MCF 10A (cell line): ENCODE measurements at regions of chr11 and their contacts with region 1.

Region 1: GRCh38 chr11:18243783-18244362 is 4.6 kb downstream of the SAA2 start:
- DNase-seq: peak; percentile 86
- H3K4me3 Mint-ChIP-seq: no peak overlapping the region
- H3K27ac Mint-ChIP-seq: no peak overlapping the region
- H3K4me1 Mint-ChIP-seq: peaks cover 24% of the 10 kb centered on the region
- H3K27me3 Mint-ChIP-seq: peaks cover 10% of the 10 kb centered on the region
- CTCF ChIP-seq: peak; percentile 94

Region 2: DNA sequence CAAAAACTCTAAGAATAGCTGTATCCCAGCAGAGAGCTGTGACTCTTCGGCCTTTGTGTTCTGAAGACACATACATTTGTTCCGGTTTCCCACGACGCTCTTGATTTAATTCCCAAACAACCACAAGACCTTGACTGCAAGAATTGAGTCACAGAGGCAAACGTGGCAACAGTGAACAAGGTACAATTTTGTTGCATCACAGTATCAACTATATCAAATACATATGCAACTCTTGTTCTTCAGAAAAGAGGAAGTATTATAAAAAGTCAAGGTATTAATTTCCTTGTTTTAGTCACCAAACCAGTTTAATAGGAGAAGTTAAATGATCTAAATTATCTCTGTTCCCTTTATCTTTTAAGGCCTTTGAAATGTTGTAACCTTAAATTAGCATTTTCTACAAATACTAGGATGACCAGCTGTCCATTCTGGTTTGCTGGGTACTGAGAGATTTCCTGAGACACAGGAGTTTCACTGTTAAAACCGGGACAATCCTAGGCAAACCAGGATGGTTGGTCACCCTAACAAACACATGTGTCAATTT is 67.0 kb after region 1 on chr11:
- CTCF ChIA-PET with region 1: interaction called, 27 read pairs
- POLR2A ChIA-PET with region 1: interaction called, 3 read pairs
- intact Hi-C with region 1: no loop called
- DNase-seq: peak; percentile 88
- H3K4me3 Mint-ChIP-seq: peak overlapping the region; percentile 60
- H3K27ac Mint-ChIP-seq: peak overlapping the region; percentile 96
- H3K4me1 Mint-ChIP-seq: peaks cover 63% of the 10 kb centered on the region
- H3K27me3 Mint-ChIP-seq: no peaks in the 10 kb centered on the region
- CTCF ChIP-seq: no peak

Region 3: DNA sequence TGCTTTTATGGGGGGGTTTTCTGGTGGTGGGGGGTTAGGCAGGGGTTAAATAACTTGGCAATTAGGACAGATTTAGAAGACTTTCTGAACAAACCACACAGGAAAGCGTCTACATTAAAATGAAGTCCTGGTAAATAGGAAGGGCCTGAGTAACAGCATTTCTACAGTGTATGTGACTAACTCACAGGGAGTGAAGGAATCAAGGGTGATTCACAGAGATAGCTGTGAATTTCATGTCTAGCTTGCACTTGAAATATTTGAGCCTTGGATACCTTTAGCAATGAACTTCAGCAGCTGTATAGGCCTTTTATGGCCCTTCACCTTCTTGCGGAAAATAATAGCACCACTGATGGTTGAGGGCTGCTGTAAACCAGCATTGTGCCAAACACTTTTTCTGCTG is 124.3 kb after region 1 on chr11:
- CTCF ChIA-PET with region 1: interaction called, 6 read pairs
- POLR2A ChIA-PET with region 1: no interaction called
- intact Hi-C with region 1: loop called (anchors 5 kb)
- DNase-seq: no peak
- H3K4me3 Mint-ChIP-seq: no peak overlapping the region
- H3K27ac Mint-ChIP-seq: no peak overlapping the region
- H3K4me1 Mint-ChIP-seq: peaks cover 6% of the 10 kb centered on the region
- H3K27me3 Mint-ChIP-seq: no peaks in the 10 kb centered on the region
- CTCF ChIP-seq: no peak

Region 4: DNA sequence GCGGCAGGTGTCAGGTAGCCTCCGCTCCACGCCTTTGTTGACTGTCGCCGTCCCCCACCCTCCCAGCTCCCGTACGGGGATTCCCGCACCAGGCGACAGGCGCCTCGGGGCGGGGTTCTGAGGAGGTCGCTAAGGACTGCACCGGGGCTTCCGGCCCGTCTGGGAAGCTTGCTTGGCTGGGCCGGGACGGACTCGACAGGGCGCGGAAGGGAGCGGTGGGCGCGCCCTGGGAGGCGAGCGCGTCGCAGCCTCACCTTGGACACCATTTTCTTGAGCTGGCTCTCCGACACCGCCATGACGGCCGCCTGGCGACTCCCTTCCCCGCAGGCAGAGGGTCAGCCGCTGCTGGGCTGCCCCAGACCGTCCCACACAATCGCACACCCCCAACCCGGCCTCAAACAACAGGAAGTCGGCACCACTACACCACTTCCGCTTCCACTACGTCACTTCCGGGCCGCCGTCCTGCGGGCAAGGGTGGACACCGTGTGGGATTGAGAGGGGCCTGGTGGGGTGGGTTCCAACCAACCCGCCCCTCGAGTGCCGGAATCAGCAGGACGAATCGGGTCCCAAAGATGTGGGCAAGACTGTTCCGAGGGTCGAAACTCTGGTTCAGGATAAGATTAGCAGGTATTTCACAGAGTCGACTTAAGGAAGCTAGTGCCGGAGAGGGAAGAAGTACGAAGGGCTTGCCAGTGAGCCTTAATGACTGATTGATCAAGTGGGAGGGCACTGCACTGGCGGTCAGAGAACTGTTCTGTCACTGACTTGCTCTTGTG is 282.8 kb after region 1 on chr11 and contains the start of gene TSG101:
- CTCF ChIA-PET with region 1: interaction called, 4 read pairs
- POLR2A ChIA-PET with region 1: no interaction called
- intact Hi-C with region 1: loop called (anchors 5 kb)
- DNase-seq: peak; percentile 92
- H3K4me3 Mint-ChIP-seq: peak within 1 kb of the TSS; percentile 91
- H3K27ac Mint-ChIP-seq: peak within 1 kb of the TSS; percentile 99
- H3K4me1 Mint-ChIP-seq: peaks cover 31% of the 10 kb centered on the region
- H3K27me3 Mint-ChIP-seq: no peaks in the 10 kb centered on the region
- CTCF ChIP-seq: no peak
- total RNA-seq, gene TSG101: 70.8 and 78.4 TPM in 2 replicates

Region 5: DNA sequence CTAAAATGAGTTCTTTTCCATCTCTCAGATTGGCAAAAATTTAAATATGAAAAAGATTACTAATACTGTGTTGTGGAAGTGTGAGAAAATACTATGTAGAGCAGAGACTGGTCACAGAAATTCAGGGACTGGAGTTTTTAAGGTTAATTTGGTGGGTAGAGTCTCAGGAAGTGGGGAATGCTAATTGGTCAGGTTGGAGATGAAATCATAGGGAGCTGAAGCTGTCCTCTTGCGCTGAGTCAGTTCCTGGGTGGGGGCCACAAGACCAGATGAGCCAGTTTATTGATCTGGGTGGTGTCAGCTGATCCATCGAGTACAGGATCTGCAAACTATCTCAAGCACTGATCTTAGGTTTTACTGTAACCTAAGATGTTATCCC is 425.3 kb after region 1 on chr11:
- CTCF ChIA-PET with region 1: no interaction called
- POLR2A ChIA-PET with region 1: no interaction called
- intact Hi-C with region 1: no loop called
- DNase-seq: no peak
- H3K4me3 Mint-ChIP-seq: no peak overlapping the region
- H3K27ac Mint-ChIP-seq: no peak overlapping the region
- H3K4me1 Mint-ChIP-seq: peaks cover 6% of the 10 kb centered on the region
- H3K27me3 Mint-ChIP-seq: no peaks in the 10 kb centered on the region
- CTCF ChIP-seq: no peak

Region 6: DNA sequence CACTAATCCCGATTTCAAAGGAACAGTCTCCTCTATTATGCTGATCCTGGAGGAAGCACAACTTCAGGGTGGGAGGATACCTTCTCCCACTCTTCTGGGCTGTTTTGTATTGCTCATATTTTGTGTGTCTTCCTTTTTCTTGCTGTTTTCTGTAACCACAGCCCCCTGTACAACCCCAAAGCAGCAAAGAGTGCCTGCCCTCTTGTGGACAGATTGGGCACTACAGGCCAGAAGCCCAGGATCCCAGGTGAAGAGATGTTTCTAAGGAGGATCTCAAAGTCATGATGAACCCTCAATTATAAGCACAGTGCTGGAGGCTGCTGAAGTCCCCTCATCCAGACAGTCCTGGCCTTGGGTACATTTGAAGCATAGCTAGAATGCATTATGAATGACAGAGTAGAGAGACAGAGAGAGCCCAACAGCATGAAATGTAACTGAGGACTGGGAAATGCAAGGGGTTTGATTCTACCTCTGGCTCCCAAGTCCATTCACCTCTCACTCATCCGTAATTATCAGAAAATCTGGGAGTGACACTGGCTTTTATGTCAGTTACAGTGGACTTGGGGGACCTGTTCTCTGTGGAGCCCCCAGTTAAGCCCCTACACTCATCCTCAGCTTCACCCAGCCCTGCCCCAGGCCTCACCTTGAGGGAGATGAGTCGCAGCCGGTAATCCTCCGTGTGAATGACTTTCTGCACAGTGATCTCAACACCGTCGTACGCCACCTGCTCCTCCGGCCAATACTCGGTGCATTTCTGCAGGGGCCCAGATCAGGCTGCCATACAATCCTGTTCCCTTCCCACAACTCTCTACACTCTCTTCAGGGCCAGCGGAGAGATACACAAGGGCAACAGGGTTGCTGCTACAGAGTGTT is 488.3 kb after region 1 on chr11:
- CTCF ChIA-PET with region 1: interaction called, 3 read pairs
- POLR2A ChIA-PET with region 1: no interaction called
- intact Hi-C with region 1: loop called (anchors 10 kb)
- DNase-seq: peak; percentile 46
- H3K4me3 Mint-ChIP-seq: no peak overlapping the region
- H3K27ac Mint-ChIP-seq: no peak overlapping the region
- H3K4me1 Mint-ChIP-seq: no peaks in the 10 kb centered on the region
- H3K27me3 Mint-ChIP-seq: no peaks in the 10 kb centered on the region
- CTCF ChIP-seq: peak; percentile 94